ENCODE measurements at regions of chr6 and their contacts with region 1.

Region 1: GRCh38 chr6:107657755-107658461 is 166.2 kb downstream of the SCML4 start:
- DNase-seq: peak; percentile 94
- ATAC-seq: peak; percentile 93
- H3K4me3 ChIP-seq: peak overlapping the region; percentile 34 to 68 (median 53)
- H3K4me3 Mint-ChIP-seq: peak overlapping the region; percentile 84
- H3K27ac ChIP-seq: peak overlapping the region; percentile 86 to 91
- H3K27ac Mint-ChIP-seq: peak overlapping the region; percentile 93
- H3K4me1 ChIP-seq: peaks cover 57 to 62% of the 10 kb centered on the region in 2 donors
- H3K4me1 Mint-ChIP-seq: peaks cover 64% of the 10 kb centered on the region
- H3K27me3 ChIP-seq: no peaks in the 10 kb centered on the region
- H3K27me3 Mint-ChIP-seq: no peaks in the 10 kb centered on the region
- CTCF ChIP-seq: peak; percentile 40

Region 2: GRCh38 chr6:107318100-107318736 is 339.7 kb before region 1 on chr6:
- CTCF ChIA-PET with region 1: interaction called, 16 read pairs
- POLR2A ChIA-PET with region 1: no interaction called
- intact Hi-C with region 1: no loop called
- DNase-seq: peak; percentile 61
- ATAC-seq: peak; percentile 80
- H3K4me3 ChIP-seq: no peak overlapping the region
- H3K4me3 Mint-ChIP-seq: no peak overlapping the region
- H3K27ac ChIP-seq: no peak overlapping the region
- H3K27ac Mint-ChIP-seq: no peak overlapping the region
- H3K4me1 ChIP-seq: peaks cover 9 to 10% of the 10 kb centered on the region in 2 donors
- H3K4me1 Mint-ChIP-seq: peaks cover 16% of the 10 kb centered on the region
- H3K27me3 ChIP-seq: no peaks in the 10 kb centered on the region
- H3K27me3 Mint-ChIP-seq: no peaks in the 10 kb centered on the region
- CTCF ChIP-seq: peak; percentile 53

Region 3: DNA sequence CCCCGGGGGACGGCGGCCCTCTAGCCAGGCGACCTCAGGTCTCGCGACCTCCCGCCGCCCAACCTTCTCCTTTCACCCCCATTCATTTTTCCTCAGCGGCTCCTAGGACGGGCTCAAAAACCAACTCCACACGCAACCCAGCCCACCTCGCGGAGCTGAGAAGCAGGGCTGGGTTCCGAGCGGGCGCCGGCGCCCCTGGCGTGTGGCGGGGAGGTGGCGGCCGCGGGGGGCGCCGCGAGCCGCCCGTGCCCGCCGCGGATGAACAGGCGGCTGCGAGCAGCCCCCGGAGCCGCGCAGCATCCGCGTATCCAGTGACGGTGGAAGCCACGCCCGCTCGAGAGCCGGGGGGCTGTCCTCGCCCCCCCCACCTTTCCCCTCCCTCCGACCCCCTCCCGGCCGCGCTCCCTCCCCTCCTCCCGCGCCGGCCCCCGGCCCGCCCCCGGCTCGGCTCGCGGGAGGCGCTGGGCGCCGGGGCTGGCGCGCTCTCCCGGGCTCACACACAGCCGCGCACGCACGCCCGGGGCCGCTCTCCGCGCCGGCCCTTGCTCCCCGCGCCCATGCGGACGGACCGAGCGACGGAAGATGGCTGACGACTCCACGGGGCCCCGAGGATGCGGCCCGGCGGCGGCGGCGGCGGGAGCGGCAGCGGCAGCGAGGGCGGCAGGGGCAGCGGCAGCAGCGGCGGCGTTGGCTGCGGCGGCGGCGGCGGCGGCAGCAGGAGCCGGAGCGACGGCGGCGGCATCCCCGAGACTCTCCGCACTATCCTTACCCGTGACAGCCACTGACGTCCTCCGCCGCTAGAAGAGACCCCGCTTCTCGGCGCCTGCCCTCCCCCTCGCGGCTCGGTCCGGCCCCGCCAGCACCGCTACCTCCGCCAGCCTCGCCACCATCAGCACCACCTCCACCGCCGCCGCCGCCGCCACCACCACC is 168.0 kb before region 1 on chr6 and contains the start of gene SOBP:
- CTCF ChIA-PET with region 1: interaction called, 10 read pairs
- POLR2A ChIA-PET with region 1: interaction called, 9 read pairs
- intact Hi-C with region 1: loop called (anchors 5 kb)
- DNase-seq: peak; percentile 77
- ATAC-seq: peak; percentile 65
- H3K4me3 ChIP-seq: peak within 1 kb of the TSS; percentile 51 to 78 (median 75)
- H3K4me3 Mint-ChIP-seq: peak within 1 kb of the TSS; percentile 93
- H3K27ac ChIP-seq: no peak within 1 kb of the TSS
- H3K27ac Mint-ChIP-seq: peak within 1 kb of the TSS; percentile 57
- H3K4me1 ChIP-seq: peaks cover 33 to 40% of the 10 kb centered on the region in 2 donors
- H3K4me1 Mint-ChIP-seq: peaks cover 32% of the 10 kb centered on the region
- H3K27me3 ChIP-seq: peaks cover 4 to 63% (median 49%) of the 10 kb centered on the region in 4 experiments
- H3K27me3 Mint-ChIP-seq: peaks cover 31% of the 10 kb centered on the region
- CTCF ChIP-seq: no peak
- total RNA-seq, gene SOBP: 1.3 and 1.5 TPM in 2 replicates

Region 4: GRCh38 chr6:107641500-107641941 is 16.4 kb before region 1 on chr6:
- CTCF ChIA-PET with region 1: interaction called, 25 read pairs
- POLR2A ChIA-PET with region 1: interaction called, 4 read pairs
- intact Hi-C with region 1: loop called (anchors 1 kb)
- DNase-seq: no peak
- ATAC-seq: no peak
- H3K4me3 ChIP-seq: no peak overlapping the region
- H3K4me3 Mint-ChIP-seq: peak overlapping the region; percentile 62
- H3K27ac ChIP-seq: peak overlapping the region; percentile 56 to 65
- H3K27ac Mint-ChIP-seq: peak overlapping the region; percentile 74
- H3K4me1 ChIP-seq: peaks cover 65 to 75% of the 10 kb centered on the region in 2 donors
- H3K4me1 Mint-ChIP-seq: peaks cover 70% of the 10 kb centered on the region
- H3K27me3 ChIP-seq: no peaks in the 10 kb centered on the region
- H3K27me3 Mint-ChIP-seq: no peaks in the 10 kb centered on the region
- CTCF ChIP-seq: no peak

Region 5: DNA sequence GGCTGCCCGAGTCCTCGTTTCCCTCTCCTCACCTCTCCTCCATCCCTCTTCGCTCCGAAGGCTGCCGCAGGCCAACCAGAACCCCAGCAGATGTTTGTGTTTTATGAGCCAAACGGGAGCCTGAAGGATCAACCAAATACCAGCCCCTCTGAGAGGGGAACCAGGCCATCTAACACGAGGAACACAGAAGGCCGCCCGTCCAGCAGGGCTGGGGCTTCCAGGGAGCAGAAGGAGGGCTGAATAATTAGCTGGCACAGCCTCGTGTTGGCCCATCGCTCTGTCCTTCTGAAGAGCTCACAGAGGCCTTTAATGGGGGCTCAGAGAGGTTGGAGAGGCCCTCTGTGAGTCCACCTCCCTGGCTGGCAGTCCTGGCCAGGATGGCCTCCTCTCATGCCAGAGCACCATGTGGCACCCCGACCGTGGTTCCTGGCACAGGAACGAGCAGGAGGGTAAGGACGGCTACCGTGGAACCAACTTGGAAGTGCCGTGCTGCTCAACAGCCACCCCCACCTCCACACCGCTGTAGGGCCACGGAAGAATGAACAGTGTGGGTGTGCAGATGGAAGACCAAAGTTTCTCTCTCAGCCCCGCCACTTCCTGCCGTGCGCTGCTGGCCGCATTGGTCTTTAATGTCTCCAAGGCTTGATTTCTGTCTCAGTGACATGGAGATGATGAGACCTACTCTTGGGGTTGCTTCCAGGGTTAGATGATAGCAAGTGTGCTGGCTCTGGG is 11.0 kb after region 1 on chr6:
- CTCF ChIA-PET with region 1: interaction called, 22 read pairs
- POLR2A ChIA-PET with region 1: interaction called, 7 read pairs
- intact Hi-C with region 1: loop called (anchors 1 kb)
- DNase-seq: peak; percentile 61
- ATAC-seq: peak; percentile 72
- H3K4me3 ChIP-seq: no peak overlapping the region
- H3K4me3 Mint-ChIP-seq: peak overlapping the region; percentile 48
- H3K27ac ChIP-seq: peak overlapping the region in 1 of 2 donors; percentile 26
- H3K27ac Mint-ChIP-seq: peak overlapping the region; percentile 83
- H3K4me1 ChIP-seq: peaks cover 62% of the 10 kb centered on the region in 2 donors
- H3K4me1 Mint-ChIP-seq: peaks cover 65% of the 10 kb centered on the region
- H3K27me3 ChIP-seq: no peaks in the 10 kb centered on the region
- H3K27me3 Mint-ChIP-seq: no peaks in the 10 kb centered on the region
- CTCF ChIP-seq: no peak